ENCODE measurements at regions of chr9 and their contacts with region 1.

Region 1: DNA sequence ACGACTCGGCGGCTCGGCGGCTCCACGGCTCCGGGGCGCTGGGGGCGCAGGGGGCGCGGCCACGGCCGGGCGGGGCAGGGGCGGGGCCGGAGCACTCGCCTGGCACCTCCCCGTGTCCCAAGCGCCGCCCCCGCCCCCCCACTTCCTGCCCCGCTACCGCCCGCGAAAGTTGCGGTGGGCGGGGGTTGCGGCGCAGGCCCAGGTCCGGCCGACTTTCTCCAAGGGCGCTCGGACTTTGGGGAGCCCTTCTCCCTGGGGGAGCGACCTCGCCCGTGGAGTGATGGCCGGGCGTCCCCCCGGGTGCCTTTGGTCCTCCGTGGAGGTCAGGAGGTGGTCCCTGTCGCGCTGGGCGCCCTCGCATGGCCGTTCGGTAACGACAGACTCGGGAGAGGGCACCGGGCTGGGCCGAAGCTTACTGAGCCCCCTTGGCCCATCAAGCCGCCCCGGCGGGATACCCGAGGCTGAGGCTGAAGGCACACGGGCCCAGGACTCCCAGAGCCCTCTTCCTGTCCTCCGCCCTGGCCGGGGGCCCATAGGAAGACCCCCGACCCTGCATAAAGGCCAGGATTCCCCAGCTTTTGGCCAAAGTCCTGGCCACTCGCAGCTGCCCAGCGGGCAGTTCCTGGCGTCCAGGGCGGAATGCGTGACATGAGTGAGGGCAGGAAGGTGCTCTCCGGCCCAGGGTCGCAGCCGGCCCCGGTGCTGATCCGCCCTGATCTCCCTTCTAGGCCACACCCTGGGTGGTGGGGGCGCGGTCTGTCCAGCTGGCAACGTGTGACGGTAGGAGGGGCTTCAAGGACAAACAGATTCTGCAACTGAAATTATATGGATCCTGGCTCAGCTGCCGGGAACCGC is 883 bp upstream of the VAV2 start:
- DNase-seq: peak; percentile 92
- CTCF ChIP-seq: peak; percentile 52

Region 2: DNA sequence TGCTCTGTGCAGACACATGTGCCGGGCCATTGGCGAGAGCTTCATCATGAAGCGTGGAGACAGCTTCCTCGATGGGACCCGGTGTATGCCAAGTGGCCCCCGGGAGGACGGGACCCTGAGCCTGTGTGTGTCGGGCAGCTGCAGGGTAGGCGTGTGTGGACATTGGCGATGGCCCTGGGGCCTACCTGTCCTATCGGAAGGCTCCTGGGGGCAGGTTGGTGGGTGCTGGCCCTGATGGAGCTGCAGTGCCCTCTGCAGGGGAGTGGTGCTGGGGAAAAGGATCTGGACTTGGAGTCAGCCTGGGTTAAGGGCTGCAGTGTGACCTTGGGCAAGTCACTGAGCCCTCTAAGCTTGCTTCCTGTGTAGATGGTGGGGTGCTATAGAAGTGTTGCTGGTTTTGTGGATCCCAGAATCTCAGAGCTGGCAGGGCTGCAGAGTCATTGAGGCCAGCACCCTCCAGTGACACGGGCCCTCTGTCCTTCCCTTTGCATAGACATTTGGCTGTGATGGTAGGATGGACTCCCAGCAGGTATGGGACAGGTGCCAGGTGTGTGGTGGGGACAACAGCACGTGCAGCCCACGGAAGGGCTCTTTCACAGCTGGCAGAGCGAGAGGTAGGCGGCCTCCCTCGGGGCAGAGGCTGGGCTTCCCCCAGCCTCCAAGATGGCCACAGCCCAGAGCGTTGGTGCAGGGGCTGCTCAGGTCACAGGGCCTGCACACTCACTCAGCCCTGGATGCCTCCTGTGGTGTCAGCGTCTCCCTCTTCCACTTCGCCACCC is 555.1 kb before region 1 on chr9:
- in situ Hi-C with region 1: no loop called
- DNase-seq: peak; percentile 74
- CTCF ChIP-seq: peak; percentile 51

Region 3: GRCh38 chr9:133701862-133702797 is 290.9 kb before region 1 on chr9:
- in situ Hi-C with region 1: no loop called
- DNase-seq: no peak
- CTCF ChIP-seq: no peak

Region 4: GRCh38 chr9:133782157-133783130 is 210.6 kb before region 1 on chr9:
- in situ Hi-C with region 1: loop called (anchors 10 kb)
- DNase-seq: peak; percentile 84
- CTCF ChIP-seq: peak; percentile 74

Measured in GM13976 (cell line).